Left ventricle myocardium inferior (tissue), 1 donor: ENCODE measurements at regions of chr11 and their contacts with region 1.

Region 1: GRCh38 chr11:17063171-17064002 is 14.1 kb downstream of the RPS13 start:
- DNase-seq: peak; percentile 64
- H3K4me3 ChIP-seq: no peak overlapping the region
- H3K27ac ChIP-seq: no peak overlapping the region
- H3K4me1 ChIP-seq: no peaks in the 10 kb centered on the region
- H3K27me3 ChIP-seq: no peaks in the 10 kb centered on the region
- CTCF ChIP-seq: peak; percentile 88

Region 2: DNA sequence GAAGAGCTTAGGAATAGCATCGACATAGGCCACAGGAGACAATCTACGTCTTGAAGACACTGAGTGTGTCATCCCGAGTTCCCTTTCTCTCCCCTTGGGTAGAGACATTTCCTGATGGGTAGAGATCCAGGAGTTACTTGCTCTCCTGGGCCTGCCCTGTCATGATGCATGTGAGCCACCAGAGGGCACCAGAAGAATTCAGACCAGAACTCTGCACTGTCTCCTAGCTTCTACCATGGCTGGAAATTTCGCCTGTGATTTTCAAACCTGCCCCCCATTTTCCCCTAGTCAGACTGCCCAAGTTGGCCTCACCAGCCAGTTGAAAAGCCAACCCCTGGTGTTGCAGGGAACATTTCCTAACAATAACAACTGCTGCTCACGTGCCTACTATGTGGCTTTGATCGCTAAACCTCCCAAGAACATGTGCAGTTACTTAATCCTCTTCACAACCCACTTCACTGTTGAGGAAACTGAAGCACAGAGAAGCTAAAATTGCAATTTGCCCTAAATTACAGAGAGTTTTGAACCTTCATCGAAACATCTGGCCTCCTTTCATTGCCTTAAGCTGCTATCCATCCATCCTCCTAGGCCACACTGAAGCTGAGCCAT is 277.8 kb before region 1 on chr11:
- intact Hi-C with region 1: loop called (anchors 10 kb)
- DNase-seq: peak; percentile 61
- H3K4me3 ChIP-seq: no peak overlapping the region
- H3K27ac ChIP-seq: peak overlapping the region; percentile 33
- H3K4me1 ChIP-seq: peaks cover 62% of the 10 kb centered on the region
- H3K27me3 ChIP-seq: no peaks in the 10 kb centered on the region
- CTCF ChIP-seq: peak; percentile 96

Region 3: GRCh38 chr11:16945671-16946469 is 117.5 kb before region 1 on chr11:
- intact Hi-C with region 1: loop called (anchors 5 kb)
- DNase-seq: peak; percentile 39
- H3K4me3 ChIP-seq: no peak overlapping the region
- H3K27ac ChIP-seq: no peak overlapping the region
- H3K4me1 ChIP-seq: peaks cover 16% of the 10 kb centered on the region
- H3K27me3 ChIP-seq: no peaks in the 10 kb centered on the region
- CTCF ChIP-seq: peak; percentile 80

Region 4: DNA sequence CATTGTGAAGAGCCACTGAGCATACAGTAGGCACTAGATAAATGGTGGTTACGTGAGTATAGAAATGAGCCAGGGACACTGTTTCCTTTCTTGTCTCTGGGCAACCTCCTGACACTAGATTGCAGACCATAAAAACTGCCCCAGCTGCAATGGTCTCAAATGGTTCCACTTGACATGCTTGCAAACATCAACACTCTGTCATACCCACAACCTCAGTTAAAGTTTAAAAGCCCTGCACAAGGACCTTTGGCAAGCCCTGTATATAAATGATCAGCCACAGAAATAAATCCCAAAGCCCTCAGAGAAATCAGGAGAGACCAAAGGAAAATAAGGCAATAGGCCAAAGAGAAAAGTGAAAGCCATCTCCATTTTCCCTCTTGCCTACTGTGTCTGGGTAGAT is 69.9 kb before region 1 on chr11:
- intact Hi-C with region 1: no loop called
- DNase-seq: no peak
- H3K4me3 ChIP-seq: no peak overlapping the region
- H3K27ac ChIP-seq: peak overlapping the region; percentile 33
- H3K4me1 ChIP-seq: peaks cover 35% of the 10 kb centered on the region
- H3K27me3 ChIP-seq: no peaks in the 10 kb centered on the region
- CTCF ChIP-seq: no peak

Region 5: DNA sequence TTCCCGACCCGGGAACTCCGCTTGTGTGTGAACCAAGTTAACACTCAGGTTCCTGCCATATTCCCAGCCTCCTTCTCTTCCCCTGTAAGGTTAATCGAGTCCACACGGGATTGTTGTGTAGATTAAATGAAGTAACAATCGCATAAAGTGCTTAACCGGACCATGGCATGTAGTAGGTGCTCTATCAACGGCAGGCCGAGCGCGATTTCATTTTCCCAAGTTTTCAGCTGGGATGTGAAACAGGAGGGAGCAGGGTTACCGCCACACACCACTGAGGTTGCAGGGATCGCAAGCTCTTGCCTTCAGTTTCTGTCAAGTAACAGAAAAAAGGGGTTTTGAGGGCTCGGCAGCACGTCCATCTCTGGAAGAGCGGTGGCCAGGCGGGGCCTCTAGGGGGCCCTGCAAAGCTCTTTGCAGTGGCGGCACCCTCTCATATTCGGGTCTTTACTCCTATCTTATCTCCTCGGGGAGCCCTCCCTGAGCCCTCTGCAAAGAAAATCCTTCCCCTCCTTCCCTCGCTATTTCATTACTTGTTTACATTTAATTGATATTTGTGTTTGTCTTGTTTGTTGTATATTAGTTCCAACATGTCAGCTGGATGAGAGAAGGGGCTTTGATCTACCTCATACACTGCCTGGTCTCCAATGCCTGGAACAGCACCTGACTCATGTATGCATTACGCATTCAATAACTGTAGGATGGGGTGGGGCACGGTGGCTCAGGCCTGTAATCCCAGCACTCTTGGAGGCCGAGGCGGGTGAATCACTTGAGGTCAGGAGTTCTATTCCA is 48.4 kb before region 1 on chr11:
- intact Hi-C with region 1: loop called (anchors 10 kb)
- DNase-seq: no peak
- H3K4me3 ChIP-seq: peak overlapping the region; percentile 87
- H3K27ac ChIP-seq: no peak overlapping the region
- H3K4me1 ChIP-seq: peaks cover 20% of the 10 kb centered on the region
- H3K27me3 ChIP-seq: peaks cover 21% of the 10 kb centered on the region
- CTCF ChIP-seq: peak; percentile 57

Region 6: GRCh38 chr11:17412488-17413180 is 349.2 kb after region 1 on chr11:
- intact Hi-C with region 1: no loop called
- DNase-seq: no peak
- H3K4me3 ChIP-seq: no peak overlapping the region
- H3K27ac ChIP-seq: no peak overlapping the region
- H3K4me1 ChIP-seq: peaks cover 21% of the 10 kb centered on the region
- H3K27me3 ChIP-seq: peaks cover 1% of the 10 kb centered on the region
- CTCF ChIP-seq: no peak